SK-N-SH (cell line): ENCODE measurements at regions of chr17 and their contacts with region 1.

Region 1: GRCh38 chr17:39980351-39981206 is at the start of gene PSMD3:
- DNase-seq: peak; percentile 94
- H3K4me3 ChIP-seq: peak within 1 kb of the TSS; percentile 80 to 89
- H3K27ac ChIP-seq: peak within 1 kb of the TSS; percentile 74 to 78
- H3K4me1 ChIP-seq: peaks cover 8% of the 10 kb centered on the region in 2 experiments
- H3K27me3 ChIP-seq: no peaks in the 10 kb centered on the region
- CTCF ChIP-seq: peak; percentile 79
- EP300 ChIP-seq: peak in 1 of 2 experiments; percentile 19; a peak in 1 of 4 replicates
- RAD21 ChIP-seq: peak; percentile 89
- polyA plus RNA-seq, gene PSMD3: 87.6 and 104 TPM in 2 replicates

Region 2: DNA sequence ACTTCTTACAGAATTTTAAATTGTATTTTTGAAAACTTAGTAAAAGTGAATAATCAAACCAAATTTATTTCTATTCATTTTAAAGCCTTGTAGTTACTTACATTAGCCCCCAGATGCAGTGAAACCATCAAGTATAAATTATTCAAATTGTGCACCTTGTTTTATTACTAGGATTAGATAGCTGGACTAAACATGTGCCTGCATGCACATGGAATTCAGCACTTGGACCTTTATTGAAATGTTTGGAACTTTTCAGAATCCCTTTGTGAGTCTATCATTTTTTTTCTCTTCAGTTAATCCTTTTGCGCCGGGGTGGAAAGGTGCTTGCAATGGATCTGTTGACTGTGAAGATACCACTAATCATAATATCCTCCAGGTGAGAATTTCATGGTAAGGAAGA is 107.8 kb before region 1 on chr17:
- CTCF ChIA-PET with region 1: interaction called, 22 read pairs
- POLR2A ChIA-PET with region 1: no interaction called
- DNase-seq: no peak
- H3K4me3 ChIP-seq: no peak overlapping the region
- H3K27ac ChIP-seq: no peak overlapping the region
- H3K4me1 ChIP-seq: no peaks in the 10 kb centered on the region
- H3K27me3 ChIP-seq: peaks cover 40% of the 10 kb centered on the region
- CTCF ChIP-seq: peak; percentile 72
- EP300 ChIP-seq: no peak
- RAD21 ChIP-seq: peak; percentile 58

Region 3: GRCh38 chr17:39939588-39940419 is 40.8 kb before region 1 on chr17:
- CTCF ChIA-PET with region 1: interaction called, 33 read pairs
- POLR2A ChIA-PET with region 1: interaction called, 5 read pairs
- DNase-seq: peak; percentile 84
- H3K4me3 ChIP-seq: peak overlapping the region in 1 of 2 experiments; percentile 40; a peak in 2 of 4 replicates
- H3K27ac ChIP-seq: peak overlapping the region; percentile 65 to 93
- H3K4me1 ChIP-seq: peaks cover 9 to 14% of the 10 kb centered on the region in 2 experiments; a peak in 2 of 4 replicates
- H3K27me3 ChIP-seq: no peaks in the 10 kb centered on the region
- CTCF ChIP-seq: peak; percentile 68
- EP300 ChIP-seq: 0 out of 4 replicates have a peak, but pooled peaks of 1 of the 2 experiments have one; percentile 46
- RAD21 ChIP-seq: peak; percentile 65

Region 4: DNA sequence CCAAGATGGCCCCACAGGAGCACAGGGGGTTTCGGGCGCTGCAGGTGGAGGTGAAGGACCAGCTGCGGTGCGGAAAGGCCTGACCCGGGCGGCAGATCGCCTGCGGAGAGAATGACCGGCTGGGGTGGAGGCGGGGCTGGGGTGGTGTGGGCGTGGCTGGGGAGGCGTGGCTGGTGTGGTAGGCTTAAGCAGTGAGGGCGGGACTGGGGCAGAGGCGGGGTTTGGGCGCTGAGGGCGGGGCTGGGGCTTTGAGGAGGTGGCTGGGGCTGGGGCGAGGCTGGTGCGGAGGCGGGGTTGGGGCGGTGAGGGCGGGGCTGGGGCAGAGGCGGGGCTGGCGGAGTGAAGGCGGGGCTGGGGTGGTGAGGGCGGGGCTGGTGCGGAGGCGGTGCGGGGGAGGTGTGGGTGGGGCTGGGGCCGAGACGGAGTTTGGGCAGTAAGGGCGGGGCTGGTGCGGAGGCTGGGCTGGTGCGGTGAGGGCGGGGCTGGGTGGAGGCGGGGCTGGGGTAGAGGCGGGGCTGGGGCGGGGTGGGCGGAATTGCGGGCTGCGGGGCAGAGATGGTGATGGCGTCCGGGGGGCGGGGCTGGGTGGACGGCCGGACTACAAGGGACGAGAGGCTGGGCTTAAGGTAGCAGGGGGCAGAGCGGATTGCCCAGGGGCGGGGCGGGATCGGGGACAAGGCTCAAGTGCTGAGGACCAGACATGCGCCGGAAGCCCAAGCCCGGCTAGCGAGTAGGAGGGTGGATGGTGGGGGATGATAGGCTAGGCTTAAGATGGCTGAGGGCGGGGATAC is 27.7 kb before region 1 on chr17:
- CTCF ChIA-PET with region 1: interaction called, 56 read pairs
- POLR2A ChIA-PET with region 1: interaction called, 13 read pairs
- DNase-seq: peak; percentile 98
- H3K4me3 ChIP-seq: peak overlapping the region; percentile 41 to 50
- H3K27ac ChIP-seq: peak overlapping the region in 1 of 2 experiments; percentile 70; a peak in 1 of 4 replicates
- H3K4me1 ChIP-seq: peaks cover 0 to 11% of the 10 kb centered on the region in 2 experiments; a peak in 1 of 4 replicates
- H3K27me3 ChIP-seq: no peaks in the 10 kb centered on the region
- CTCF ChIP-seq: no peak
- EP300 ChIP-seq: no peak
- RAD21 ChIP-seq: no peak

Region 5: DNA sequence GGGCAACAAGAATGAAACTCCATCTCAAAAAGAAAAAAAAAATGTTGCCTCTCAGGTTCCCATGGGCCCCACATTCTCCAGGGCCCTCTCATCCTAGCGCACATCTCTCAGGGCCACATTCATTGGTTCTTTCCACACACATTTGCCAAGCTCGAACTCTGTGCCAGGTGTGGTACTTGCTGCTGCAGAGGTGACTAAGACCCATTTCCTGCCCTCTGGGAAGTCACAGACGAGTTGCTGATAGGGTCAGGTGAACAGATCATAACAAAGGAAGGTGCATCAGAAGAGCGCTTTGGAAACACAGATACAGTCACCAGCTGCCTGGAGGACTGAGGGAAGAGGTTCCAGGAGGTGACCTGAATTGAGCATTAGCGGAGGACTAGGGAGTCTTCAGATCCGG is 16.8 kb before region 1 on chr17:
- CTCF ChIA-PET with region 1: interaction called, 35 read pairs
- POLR2A ChIA-PET with region 1: interaction called, 13 read pairs
- DNase-seq: no peak
- H3K4me3 ChIP-seq: no peak overlapping the region
- H3K27ac ChIP-seq: no peak overlapping the region
- H3K4me1 ChIP-seq: no peaks in the 10 kb centered on the region
- H3K27me3 ChIP-seq: no peaks in the 10 kb centered on the region
- CTCF ChIP-seq: no peak
- EP300 ChIP-seq: no peak
- RAD21 ChIP-seq: no peak

Region 6: DNA sequence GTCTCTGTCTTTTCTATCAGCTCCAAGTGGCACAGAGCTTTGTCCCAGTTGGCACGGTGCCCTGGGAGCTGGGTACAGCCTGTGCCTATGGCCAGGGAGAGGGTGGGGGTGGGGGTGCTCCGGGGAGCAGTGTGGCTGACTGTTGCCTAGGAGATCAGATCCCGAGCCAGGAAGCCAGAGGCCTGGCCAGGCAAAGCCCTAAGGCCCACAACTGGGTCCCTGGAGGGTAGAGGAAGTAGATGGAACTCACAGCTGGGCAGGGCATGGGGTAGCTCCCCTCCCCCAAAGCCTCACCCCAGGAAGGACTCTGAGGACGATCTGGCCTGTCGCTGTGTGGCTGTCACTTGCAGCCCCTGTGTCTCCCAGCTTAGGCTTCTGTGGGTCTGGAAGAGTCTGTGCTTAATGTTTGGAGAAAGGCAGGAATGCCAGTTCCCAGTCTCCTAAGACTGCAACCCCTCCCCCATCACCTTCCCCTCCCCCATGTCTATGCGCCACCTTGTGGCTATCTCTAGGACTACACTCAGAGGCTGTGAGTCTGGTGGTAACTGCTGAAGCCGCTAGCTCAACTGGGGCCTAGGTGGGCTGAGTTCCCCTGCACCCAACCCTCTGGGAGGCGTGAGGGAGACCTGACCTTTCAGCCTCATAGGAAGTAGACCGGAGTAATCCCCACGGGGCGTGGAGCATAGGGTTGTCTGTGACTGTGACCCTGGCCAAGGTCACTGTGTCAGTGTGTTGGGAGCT is 94.8 kb after region 1 on chr17:
- CTCF ChIA-PET with region 1: no interaction called
- POLR2A ChIA-PET with region 1: no interaction called
- DNase-seq: peak; percentile 83
- H3K4me3 ChIP-seq: no peak overlapping the region; a peak in 1 of 4 replicates
- H3K27ac ChIP-seq: peak overlapping the region; percentile 54 to 76; a peak in 3 of 4 replicates
- H3K4me1 ChIP-seq: peaks cover 32 to 59% of the 10 kb centered on the region in 2 experiments; a peak in 3 of 4 replicates
- H3K27me3 ChIP-seq: no peaks in the 10 kb centered on the region
- CTCF ChIP-seq: peak; percentile 88
- EP300 ChIP-seq: peak in 1 of 2 experiments; percentile 12; a peak in 1 of 4 replicates
- RAD21 ChIP-seq: peak; percentile 69